HepG2 (cell line): ENCODE measurements at regions of chr12 and their contacts with region 1.

Region 1: DNA sequence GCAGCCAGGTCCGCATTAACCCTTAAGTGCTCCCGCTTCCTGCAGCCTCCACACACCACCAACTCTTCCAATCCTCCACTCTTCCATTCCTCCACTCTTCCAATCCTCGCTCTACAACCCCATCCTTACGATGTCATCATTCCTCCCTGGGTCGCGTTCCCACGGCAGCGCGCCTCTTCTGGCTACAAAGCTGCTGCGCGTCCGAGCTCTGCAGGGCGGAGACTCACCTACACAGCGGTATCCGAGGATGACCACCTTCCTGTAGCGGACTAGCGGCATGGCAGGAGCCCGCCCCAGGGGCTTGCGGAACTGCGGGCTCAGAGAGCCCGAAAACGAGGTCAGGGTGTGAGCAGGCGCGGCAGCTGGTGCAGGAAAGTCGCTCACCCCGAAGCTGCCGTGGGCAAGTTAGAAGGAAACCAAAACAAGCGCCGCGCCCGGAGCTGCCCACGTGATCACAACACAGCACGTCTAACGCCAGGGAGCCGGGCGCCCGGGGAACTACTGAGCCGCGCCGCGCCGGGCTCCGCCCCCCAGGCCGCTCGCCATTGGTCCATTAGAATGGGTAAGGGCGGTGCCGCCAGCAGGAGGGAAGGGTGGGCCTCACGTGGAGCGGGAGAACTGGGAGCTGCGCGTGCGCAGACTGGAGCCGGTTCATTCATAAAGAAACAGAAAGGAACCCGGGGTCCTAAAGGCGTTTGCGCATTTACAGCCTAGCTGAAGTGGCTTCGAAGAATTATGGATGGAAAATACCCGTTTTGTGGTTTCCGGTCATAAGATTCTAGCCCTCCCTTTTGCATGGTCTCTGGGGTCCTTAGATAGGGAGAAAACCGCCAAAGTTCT is at the start of gene RHEBL1:
- DNase-seq: peak; percentile 94
- ATAC-seq: peak; percentile 99
- H3K4me3 ChIP-seq: peak within 1 kb of the TSS; percentile 73 to 85 (median 80)
- H3K27ac ChIP-seq: peak within 1 kb of the TSS; percentile 54
- H3K4me1 ChIP-seq: peaks cover 24% of the 10 kb centered on the region
- H3K27me3 ChIP-seq: no peaks in the 10 kb centered on the region
- CTCF ChIP-seq: peak; percentile 56
- EP300 ChIP-seq: no peak
- POLR2A ChIP-seq: peak in 1 of 2 experiments; percentile 50; a peak in 2 of 4 replicates
- RAD21 ChIP-seq: 0 out of 2 replicates have a peak, but pooled peaks have one; percentile 11
- total RNA-seq, gene RHEBL1: 1.4 and 1.6 TPM in 2 replicates

Region 2: DNA sequence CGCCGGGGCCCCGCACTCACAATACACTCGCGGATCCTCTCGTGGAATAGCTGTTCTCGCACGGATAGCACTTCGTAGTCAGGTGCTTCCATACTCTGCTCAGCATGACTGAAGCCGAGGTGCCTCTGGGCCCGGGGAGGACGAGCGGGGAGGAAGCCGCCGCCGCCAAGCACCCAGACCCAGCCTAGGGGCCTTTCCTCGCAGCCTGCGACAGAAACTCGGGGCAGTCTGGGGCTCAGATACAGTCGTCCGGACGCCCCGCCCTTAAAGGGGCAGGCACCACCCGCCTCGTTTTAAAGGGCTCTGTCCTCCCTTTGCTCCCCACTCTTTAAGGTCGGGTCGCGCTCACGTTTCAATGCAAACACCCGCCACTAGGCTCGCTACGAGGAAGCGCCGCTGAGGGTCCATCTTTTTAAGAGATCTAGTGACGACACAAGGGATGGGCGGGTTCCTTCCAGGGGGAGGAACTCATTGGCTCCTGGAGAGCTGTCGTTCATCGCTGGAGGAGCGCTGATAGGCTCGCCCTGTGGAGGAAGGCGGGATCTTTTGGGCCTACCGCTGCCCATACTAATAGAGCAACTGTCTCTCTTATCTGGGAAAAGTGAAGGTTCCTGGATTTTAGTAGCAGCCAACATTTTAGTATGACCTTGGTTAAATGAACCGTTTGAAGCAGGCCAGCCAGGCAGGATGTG is 40.9 kb after region 1 on chr12 and contains the start of gene LMBR1L:
- CTCF ChIA-PET with region 1: no interaction called
- POLR2A ChIA-PET with region 1: interaction called, 12 read pairs
- in situ Hi-C with region 1: no loop called
- intact Hi-C with region 1: no loop called
- DNase-seq: peak; percentile 97
- ATAC-seq: peak; percentile 98
- H3K4me3 ChIP-seq: peak within 1 kb of the TSS; percentile 75 to 95 (median 87)
- H3K27ac ChIP-seq: peak within 1 kb of the TSS; percentile 58
- H3K4me1 ChIP-seq: peaks cover 21% of the 10 kb centered on the region
- H3K27me3 ChIP-seq: no peaks in the 10 kb centered on the region; a peak in 1 of 5 replicates
- CTCF ChIP-seq: peak; percentile 33; the same call in 1 of the 2 replicates
- EP300 ChIP-seq: no peak
- POLR2A ChIP-seq: peak; percentile 27 to 83; a peak in 3 of 4 replicates
- RAD21 ChIP-seq: no peak; the same call in 1 of the 2 replicates
- total RNA-seq, gene LMBR1L: 7.3 and 12.2 TPM in 2 replicates